CD4-positive, alpha-beta memory T cell (primary cell): ENCODE measurements at regions of chr6 and their contacts with region 1.

Region 1: DNA sequence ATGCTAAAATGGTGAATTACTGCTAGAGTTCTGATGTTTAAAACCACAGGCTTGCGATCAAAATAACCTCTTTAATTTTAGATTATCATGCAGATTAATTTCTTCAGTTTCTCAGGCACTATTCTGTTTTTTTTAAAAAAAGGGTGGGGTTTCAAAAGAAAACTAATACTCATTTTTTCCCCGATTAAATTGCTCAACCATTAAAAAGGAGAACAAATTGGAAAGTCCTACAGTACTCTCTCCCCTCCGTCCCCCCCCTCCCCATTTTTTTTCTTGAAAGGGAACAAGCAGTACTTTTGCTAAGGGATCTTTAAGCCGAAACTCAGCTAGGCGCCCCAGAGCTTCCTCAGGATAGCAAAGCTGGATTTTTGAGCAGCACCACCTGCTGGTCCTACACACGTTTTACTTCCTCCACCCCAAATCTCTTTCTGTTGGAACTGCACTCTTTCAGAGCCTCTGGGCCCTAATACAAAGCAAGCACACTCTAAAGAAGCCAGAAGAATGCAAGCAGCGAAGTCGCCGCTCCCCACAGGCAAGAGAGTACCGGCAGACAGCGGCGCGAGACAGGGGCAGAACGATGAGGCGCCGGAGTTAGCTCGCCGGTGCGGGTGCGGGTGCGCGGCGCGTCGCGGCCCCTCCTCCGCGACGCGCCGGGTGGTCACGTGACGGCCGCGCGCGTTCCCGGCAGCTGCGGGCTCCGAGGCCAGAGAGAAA is at the start of gene RNF146:
- DNase-seq: peak; percentile 76 to 83 (median 77)
- H3K4me3 ChIP-seq: peak within 1 kb of the TSS; percentile 71 to 94
- H3K4me3 Mint-ChIP-seq: peak within 1 kb of the TSS; percentile 97 to 100 (median 100)
- H3K27ac ChIP-seq: peak within 1 kb of the TSS; percentile 94
- H3K27ac Mint-ChIP-seq: peak within 1 kb of the TSS; percentile 89 to 100 (median 99)
- H3K4me1 ChIP-seq: peaks cover 23% of the 10 kb centered on the region
- H3K4me1 Mint-ChIP-seq: peaks cover 25 to 42% (median 35%) of the 10 kb centered on the region in 4 donors
- H3K27me3 ChIP-seq: no peaks in the 10 kb centered on the region
- H3K27me3 Mint-ChIP-seq: peaks cover 0 to 2% of the 10 kb centered on the region in 2 donors
- total RNA-seq, gene RNF146: 36.4 to 39.9 TPM

Region 2: DNA sequence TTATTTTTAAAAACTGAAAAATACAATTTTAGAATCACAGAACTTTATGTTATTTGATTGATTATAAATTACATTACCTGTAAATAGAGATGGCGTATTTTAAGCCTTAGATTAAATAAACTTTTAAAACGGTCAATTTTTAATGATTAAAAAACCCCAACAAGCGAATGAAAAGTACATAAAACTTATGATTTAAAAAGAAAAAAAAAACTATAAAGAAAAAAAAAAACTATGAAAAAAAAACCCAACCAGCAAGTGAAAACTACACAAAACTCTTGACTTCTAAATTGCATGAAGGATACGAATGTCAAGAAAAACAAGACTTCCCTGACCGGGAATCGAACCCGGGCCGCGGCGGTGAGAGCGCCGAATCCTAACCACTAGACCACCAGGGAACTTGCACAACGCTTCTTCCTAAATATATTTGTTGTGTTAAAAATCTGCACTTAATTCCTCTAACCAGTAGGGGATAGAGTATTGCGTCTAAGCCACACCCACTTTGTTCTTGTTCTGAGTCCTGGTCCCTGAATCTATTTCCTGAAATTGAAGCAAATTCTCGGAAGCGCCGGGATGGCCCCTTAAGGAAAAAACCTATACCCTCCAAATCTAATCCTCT is 1486.3 kb before region 1 on chr6:
- CTCF ChIA-PET with region 1: no interaction called
- POLR2A ChIA-PET with region 1: interaction called, 6 read pairs
- intact Hi-C with region 1: loop called (anchors 2 kb)
- DNase-seq: peak; percentile 87 to 94 (median 92)
- H3K4me3 ChIP-seq: peak overlapping the region; percentile 69 to 92
- H3K4me3 Mint-ChIP-seq: no peak overlapping the region
- H3K27ac ChIP-seq: peak overlapping the region; percentile 72
- H3K27ac Mint-ChIP-seq: no peak overlapping the region
- H3K4me1 ChIP-seq: peaks cover 17% of the 10 kb centered on the region
- H3K4me1 Mint-ChIP-seq: peaks cover 10 to 13% (median 12%) of the 10 kb centered on the region in 4 donors
- H3K27me3 ChIP-seq: no peaks in the 10 kb centered on the region
- H3K27me3 Mint-ChIP-seq: no peaks in the 10 kb centered on the region

Region 3: GRCh38 chr6:125995972-125996580 is 1270.3 kb before region 1 on chr6:
- CTCF ChIA-PET with region 1: interaction called, 3 read pairs
- POLR2A ChIA-PET with region 1: no interaction called
- intact Hi-C with region 1: loop called (anchors 1 kb)
- DNase-seq: peak; percentile 56 to 73 (median 68)
- H3K4me3 ChIP-seq: no peak overlapping the region
- H3K4me3 Mint-ChIP-seq: peak overlapping the region; percentile 51 to 90 (median 83)
- H3K27ac ChIP-seq: no peak overlapping the region
- H3K27ac Mint-ChIP-seq: peak overlapping the region; percentile 0 to 68 (median 50)
- H3K4me1 ChIP-seq: no peaks in the 10 kb centered on the region
- H3K4me1 Mint-ChIP-seq: peaks cover 22 to 37% (median 25%) of the 10 kb centered on the region in 4 donors
- H3K27me3 ChIP-seq: no peaks in the 10 kb centered on the region
- H3K27me3 Mint-ChIP-seq: no peaks in the 10 kb centered on the region

Region 4: GRCh38 chr6:127247114-127248096 is 18.9 kb before region 1 on chr6:
- CTCF ChIA-PET with region 1: interaction called, 16 read pairs
- POLR2A ChIA-PET with region 1: no interaction called
- intact Hi-C with region 1: no loop called
- DNase-seq: no peak
- H3K4me3 ChIP-seq: no peak overlapping the region
- H3K4me3 Mint-ChIP-seq: no peak overlapping the region
- H3K27ac ChIP-seq: no peak overlapping the region
- H3K27ac Mint-ChIP-seq: no peak overlapping the region
- H3K4me1 ChIP-seq: no peaks in the 10 kb centered on the region
- H3K4me1 Mint-ChIP-seq: no peaks in the 10 kb centered on the region
- H3K27me3 ChIP-seq: peaks cover 5% of the 10 kb centered on the region
- H3K27me3 Mint-ChIP-seq: peaks cover 4 to 6% of the 10 kb centered on the region in 2 donors

Region 5: GRCh38 chr6:127291495-127291894 is 25.2 kb after region 1 on chr6:
- CTCF ChIA-PET with region 1: interaction called, 14 read pairs
- POLR2A ChIA-PET with region 1: interaction called, 12 read pairs
- intact Hi-C with region 1: no loop called
- DNase-seq: peak in 2 of 5 donors; percentile 2 to 12
- H3K4me3 ChIP-seq: no peak overlapping the region
- H3K4me3 Mint-ChIP-seq: peak overlapping the region; percentile 66 to 91 (median 74)
- H3K27ac ChIP-seq: no peak overlapping the region
- H3K27ac Mint-ChIP-seq: peak overlapping the region; percentile 40 to 89 (median 75)
- H3K4me1 ChIP-seq: peaks cover 18% of the 10 kb centered on the region
- H3K4me1 Mint-ChIP-seq: peaks cover 24 to 37% (median 36%) of the 10 kb centered on the region in 4 donors
- H3K27me3 ChIP-seq: no peaks in the 10 kb centered on the region
- H3K27me3 Mint-ChIP-seq: no peaks in the 10 kb centered on the region

Region 6: GRCh38 chr6:127342946-127343808 is 76.8 kb after region 1 on chr6 and contains the start of gene ECHDC1:
- CTCF ChIA-PET with region 1: interaction called, 7 read pairs
- POLR2A ChIA-PET with region 1: interaction called, 10 read pairs
- intact Hi-C with region 1: loop called (anchors 5 kb)
- DNase-seq: peak; percentile 65 to 71 (median 69)
- H3K4me3 ChIP-seq: peak within 1 kb of the TSS; percentile 70 to 97
- H3K4me3 Mint-ChIP-seq: no peak within 1 kb of the TSS
- H3K27ac ChIP-seq: peak within 1 kb of the TSS; percentile 65
- H3K27ac Mint-ChIP-seq: no peak within 1 kb of the TSS
- H3K4me1 ChIP-seq: peaks cover 52% of the 10 kb centered on the region
- H3K4me1 Mint-ChIP-seq: peaks cover 4 to 18% (median 12%) of the 10 kb centered on the region in 4 donors
- H3K27me3 ChIP-seq: no peaks in the 10 kb centered on the region
- H3K27me3 Mint-ChIP-seq: no peaks in the 10 kb centered on the region
- total RNA-seq, gene ECHDC1: 35.5 to 39.3 TPM

Region 7: DNA sequence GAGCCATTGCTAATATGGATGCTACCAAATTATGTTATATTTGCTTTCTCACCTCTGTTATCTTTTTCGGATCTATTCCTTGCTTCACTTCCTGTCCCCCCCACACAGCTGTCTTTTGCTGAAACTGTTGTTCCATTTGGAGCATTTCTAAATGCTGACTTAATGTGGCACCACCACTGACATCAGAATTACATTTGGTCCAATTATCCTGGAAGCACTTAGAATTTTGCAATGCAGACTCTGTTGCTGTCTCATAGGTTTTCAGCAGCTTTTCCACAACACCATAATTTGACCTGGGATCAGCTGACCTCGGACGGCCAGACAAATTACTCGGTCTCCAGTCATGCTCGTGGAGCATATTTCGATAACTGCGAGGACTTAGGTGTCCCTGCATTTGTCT is 180.0 kb after region 1 on chr6:
- CTCF ChIA-PET with region 1: no interaction called
- POLR2A ChIA-PET with region 1: no interaction called
- intact Hi-C with region 1: no loop called
- DNase-seq: no peak
- H3K4me3 ChIP-seq: no peak overlapping the region
- H3K4me3 Mint-ChIP-seq: no peak overlapping the region
- H3K27ac ChIP-seq: no peak overlapping the region
- H3K27ac Mint-ChIP-seq: no peak overlapping the region
- H3K4me1 ChIP-seq: no peaks in the 10 kb centered on the region
- H3K4me1 Mint-ChIP-seq: peaks cover 0 to 3% (median 0%) of the 10 kb centered on the region in 4 donors
- H3K27me3 ChIP-seq: no peaks in the 10 kb centered on the region
- H3K27me3 Mint-ChIP-seq: no peaks in the 10 kb centered on the region

Region 8: GRCh38 chr6:128520436-128521281 is 1254.3 kb after region 1 on chr6 and contains the start of gene PTPRK:
- CTCF ChIA-PET with region 1: no interaction called
- POLR2A ChIA-PET with region 1: no interaction called
- intact Hi-C with region 1: loop called (anchors 1 kb)
- DNase-seq: peak; percentile 77 to 88 (median 81)
- H3K4me3 ChIP-seq: peak within 1 kb of the TSS; percentile 59 to 71
- H3K4me3 Mint-ChIP-seq: peak within 1 kb of the TSS; percentile 85 to 96 (median 90)
- H3K27ac ChIP-seq: peak within 1 kb of the TSS; percentile 3
- H3K27ac Mint-ChIP-seq: peak within 1 kb of the TSS; percentile 58 to 87 (median 84)
- H3K4me1 ChIP-seq: peaks cover 23% of the 10 kb centered on the region
- H3K4me1 Mint-ChIP-seq: peaks cover 11 to 27% (median 19%) of the 10 kb centered on the region in 4 donors
- H3K27me3 ChIP-seq: peaks cover 37% of the 10 kb centered on the region
- H3K27me3 Mint-ChIP-seq: peaks cover 47 to 62% of the 10 kb centered on the region in 2 donors
- total RNA-seq, gene PTPRK: 0.47 to 0.61 TPM